ENCODE measurements at regions of chr15 and their contacts with region 1.

Region 1: DNA sequence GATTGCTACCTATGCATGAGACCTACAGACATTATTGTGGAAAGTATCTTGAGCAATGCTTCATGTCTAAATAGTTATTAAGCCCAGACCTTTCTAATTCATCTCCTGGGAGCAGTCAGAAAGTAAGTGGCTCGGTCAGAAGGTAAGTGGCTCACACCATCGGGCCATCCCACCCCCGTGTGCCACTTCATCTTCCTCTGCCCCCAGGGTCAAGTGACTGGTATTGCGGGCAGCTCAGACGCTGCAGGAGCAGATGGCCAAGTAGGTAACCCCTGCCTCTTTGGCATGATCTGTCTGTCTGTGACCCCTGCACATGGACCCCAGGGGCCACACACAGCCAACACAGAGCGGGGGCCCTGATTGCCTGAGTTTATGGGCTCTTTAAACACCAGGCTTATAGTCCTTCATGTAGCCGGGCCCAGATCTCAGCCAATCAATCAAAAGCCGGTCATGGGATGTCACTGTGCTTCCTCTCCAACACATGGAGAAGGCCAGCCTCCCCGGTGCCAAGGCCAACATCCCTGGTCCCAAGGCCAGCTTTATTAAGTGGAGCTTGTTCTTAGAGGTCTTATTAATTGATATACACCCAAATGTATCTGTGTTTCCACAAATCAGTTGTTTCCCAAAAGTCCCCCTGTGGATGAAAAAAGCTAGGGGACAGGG is 42.9 kb downstream of the LARP6 start:
- DNase-seq: no peak
- H3K4me3 Mint-ChIP-seq: no peak overlapping the region
- H3K27ac Mint-ChIP-seq: no peak overlapping the region
- H3K4me1 Mint-ChIP-seq: peaks cover 2% of the 10 kb centered on the region
- H3K27me3 Mint-ChIP-seq: peaks cover 8% of the 10 kb centered on the region

Region 2: GRCh38 chr15:70679919-70680231 is 131.2 kb before region 1 on chr15:
- intact Hi-C with region 1: loop called (anchors 5 kb)
- DNase-seq: no peak
- H3K4me3 Mint-ChIP-seq: no peak overlapping the region
- H3K27ac Mint-ChIP-seq: no peak overlapping the region
- H3K4me1 Mint-ChIP-seq: peaks cover 2% of the 10 kb centered on the region
- H3K27me3 Mint-ChIP-seq: peaks cover 49% of the 10 kb centered on the region

Region 3: GRCh38 chr15:70833897-70834765 is 23.1 kb after region 1 on chr15:
- intact Hi-C with region 1: no loop called
- DNase-seq: no peak
- H3K4me3 Mint-ChIP-seq: no peak overlapping the region
- H3K27ac Mint-ChIP-seq: no peak overlapping the region
- H3K4me1 Mint-ChIP-seq: no peaks in the 10 kb centered on the region
- H3K27me3 Mint-ChIP-seq: no peaks in the 10 kb centered on the region

Region 4: GRCh38 chr15:70856884-70857561 is 46.0 kb after region 1 on chr15:
- intact Hi-C with region 1: no loop called
- DNase-seq: no peak
- H3K4me3 Mint-ChIP-seq: no peak overlapping the region
- H3K27ac Mint-ChIP-seq: no peak overlapping the region
- H3K4me1 Mint-ChIP-seq: peaks cover 4% of the 10 kb centered on the region
- H3K27me3 Mint-ChIP-seq: peaks cover 42% of the 10 kb centered on the region